Dorsolateral prefrontal cortex (tissue), 120 donors: ENCODE measurements at regions of chr2 and their contacts with region 1.

Region 1: GRCh38 chr2:217785544-217786045 is 217.2 kb downstream of the TNS1 start:
- DNase-seq: peak in 9 of 10 donors; percentile 46 to 91 (median 85)
- H3K4me3 ChIP-seq: peak overlapping the region in 2 of 59 donors; percentile 22 to 29
- H3K27ac ChIP-seq: peak overlapping the region in 1 of 59 donors; percentile 6
- H3K27me3 ChIP-seq: no peaks in the 10 kb centered on the region
- CTCF ChIP-seq: peak; percentile 82 to 99 (median 97)

Region 2: DNA sequence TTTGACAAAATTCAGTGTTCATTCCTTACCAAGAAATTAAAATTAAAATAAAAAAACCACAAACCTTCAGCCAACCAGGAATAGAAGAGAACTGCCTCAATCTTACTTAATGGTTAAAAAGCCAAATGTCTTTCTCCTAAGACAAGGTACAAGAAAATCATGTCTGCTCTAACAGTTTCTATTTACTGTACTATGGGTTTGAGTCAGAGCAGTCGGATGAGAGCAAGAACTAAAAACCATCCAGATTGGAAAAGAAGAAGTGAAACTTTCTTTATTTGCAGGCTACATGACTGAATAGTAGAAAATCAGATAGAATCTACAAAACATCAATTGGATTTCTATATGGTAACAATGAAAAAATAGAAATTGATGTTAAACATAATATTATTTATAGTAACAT is 370.3 kb before region 1 on chr2:
- intact Hi-C with region 1: no loop called
- DNase-seq: no peak
- H3K4me3 ChIP-seq: no peak overlapping the region
- H3K27ac ChIP-seq: no peak overlapping the region
- H3K27me3 ChIP-seq: no peaks in the 10 kb centered on the region
- CTCF ChIP-seq: no peak

Region 3: DNA sequence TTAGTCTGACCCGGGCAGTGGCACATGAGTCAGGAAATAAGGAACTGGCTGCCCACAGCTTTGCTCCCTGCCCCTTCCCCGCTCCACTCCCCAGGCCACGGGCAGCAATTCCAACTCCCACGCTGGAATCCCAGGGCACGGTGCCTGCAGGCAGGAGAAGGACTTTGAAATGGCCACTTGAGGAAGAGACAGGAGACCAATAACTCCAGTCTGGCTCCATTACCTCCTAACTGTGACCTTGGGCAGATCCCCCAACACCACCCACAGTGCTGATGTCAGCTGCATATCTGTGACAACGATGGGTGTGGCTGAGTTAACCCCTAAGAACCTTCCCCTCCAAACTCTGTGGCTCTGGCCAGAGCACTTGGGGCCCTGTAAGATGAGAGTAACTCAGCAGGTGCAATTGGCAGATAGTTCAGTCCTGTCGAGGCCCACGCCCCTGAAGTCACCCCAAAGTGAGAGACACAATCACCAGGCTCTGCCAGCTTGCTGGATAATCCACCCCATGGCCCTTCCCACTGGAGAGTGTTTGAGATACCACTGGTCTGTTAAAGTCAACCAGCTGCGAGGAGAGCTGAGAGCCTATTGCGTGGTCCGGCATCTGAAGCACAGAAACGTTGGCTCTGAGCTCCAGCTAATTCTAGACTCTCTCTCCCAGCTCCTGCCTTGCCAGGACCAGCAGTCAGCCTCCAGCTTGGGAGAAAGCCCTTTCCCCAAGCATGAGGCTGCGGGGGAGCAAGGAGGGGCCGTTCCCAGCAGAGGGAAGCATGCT is 42.0 kb after region 1 on chr2:
- intact Hi-C with region 1: loop called in 1 of 2 experiments (anchors 5 kb)
- DNase-seq: no peak
- H3K4me3 ChIP-seq: no peak overlapping the region
- H3K27ac ChIP-seq: peak overlapping the region in 6 of 59 donors; percentile 1 to 48 (median 16)
- H3K27me3 ChIP-seq: no peaks in the 10 kb centered on the region
- CTCF ChIP-seq: no peak

Region 4: GRCh38 chr2:217886720-217887309 is 101.2 kb after region 1 on chr2:
- intact Hi-C with region 1: loop called (anchors 1 to 2 kb)
- DNase-seq: peak; percentile 51 to 86 (median 65)
- H3K4me3 ChIP-seq: no peak overlapping the region
- H3K27ac ChIP-seq: peak overlapping the region in 4 of 59 donors; percentile 10 to 19 (median 13)
- H3K27me3 ChIP-seq: no peaks in the 10 kb centered on the region
- CTCF ChIP-seq: peak; percentile 69 to 92 (median 86)

Region 5: GRCh38 chr2:217934321-217935131 is 148.9 kb after region 1 on chr2:
- intact Hi-C with region 1: loop called in 1 of 2 experiments (anchors 5 kb)
- DNase-seq: peak in 5 of 10 donors; percentile 41 to 75 (median 62)
- H3K4me3 ChIP-seq: peak overlapping the region in 18 of 59 donors; percentile 0 to 37 (median 12)
- H3K27ac ChIP-seq: peak overlapping the region in 50 of 59 donors; percentile 1 to 84 (median 60)
- H3K27me3 ChIP-seq: no peaks in the 10 kb centered on the region
- CTCF ChIP-seq: no peak

Region 6: GRCh38 chr2:217988014-217988839 is 202.6 kb after region 1 on chr2:
- intact Hi-C with region 1: loop called (anchors 1 to 2 kb)
- DNase-seq: peak; percentile 37 to 84 (median 80)
- H3K4me3 ChIP-seq: peak overlapping the region in 6 of 59 donors; percentile 10 to 36 (median 24)
- H3K27ac ChIP-seq: peak overlapping the region in 11 of 59 donors; percentile 10 to 53 (median 26)
- H3K27me3 ChIP-seq: no peaks in the 10 kb centered on the region
- CTCF ChIP-seq: peak; percentile 72 to 97 (median 90)

Region 7: GRCh38 chr2:218033590-218034496 is 248.2 kb after region 1 on chr2:
- intact Hi-C with region 1: loop called (anchors 2 to 10 kb)
- DNase-seq: peak in 3 of 10 donors; percentile 7 to 25 (median 8)
- H3K4me3 ChIP-seq: peak overlapping the region in 20 of 59 donors; percentile 16 to 62 (median 44)
- H3K27ac ChIP-seq: no peak overlapping the region
- H3K27me3 ChIP-seq: peaks cover 0 to 16% (median 0%) of the 10 kb centered on the region in 45 donors
- CTCF ChIP-seq: no peak

Region 8: GRCh38 chr2:218066926-218067515 is 281.4 kb after region 1 on chr2:
- intact Hi-C with region 1: loop called (anchors 2 to 5 kb)
- DNase-seq: no peak
- H3K4me3 ChIP-seq: no peak overlapping the region
- H3K27ac ChIP-seq: no peak overlapping the region
- H3K27me3 ChIP-seq: peaks cover 0 to 17% (median 0%) of the 10 kb centered on the region in 45 donors
- CTCF ChIP-seq: no peak